ENCODE measurements at regions of chr22 and their contacts with region 1.

Region 1: GRCh38 chr22:41822317-41823060 is 10.4 kb upstream of the SREBF2 start:
- DNase-seq: peak; percentile 86
- H3K4me3 ChIP-seq: no peak overlapping the region
- H3K27ac ChIP-seq: no peak overlapping the region
- H3K4me1 ChIP-seq: peaks cover 9% of the 10 kb centered on the region
- H3K27me3 ChIP-seq: no peaks in the 10 kb centered on the region
- CTCF ChIP-seq: peak; percentile 58 to 63

Region 2: GRCh38 chr22:41697126-41697775 is 125.2 kb before region 1 on chr22:
- CTCF ChIA-PET with region 1: no interaction called
- dilution Hi-C with region 1: no loop called
- in situ Hi-C with region 1: no loop called
- intact Hi-C with region 1: loop called (anchors 1 kb)
- DNase-seq: peak; percentile 64
- H3K4me3 ChIP-seq: peak overlapping the region in 1 of 3 experiments; percentile 28
- H3K27ac ChIP-seq: no peak overlapping the region
- H3K4me1 ChIP-seq: peaks cover 17% of the 10 kb centered on the region
- H3K27me3 ChIP-seq: no peaks in the 10 kb centered on the region
- CTCF ChIP-seq: peak; percentile 88 to 98

Region 3: DNA sequence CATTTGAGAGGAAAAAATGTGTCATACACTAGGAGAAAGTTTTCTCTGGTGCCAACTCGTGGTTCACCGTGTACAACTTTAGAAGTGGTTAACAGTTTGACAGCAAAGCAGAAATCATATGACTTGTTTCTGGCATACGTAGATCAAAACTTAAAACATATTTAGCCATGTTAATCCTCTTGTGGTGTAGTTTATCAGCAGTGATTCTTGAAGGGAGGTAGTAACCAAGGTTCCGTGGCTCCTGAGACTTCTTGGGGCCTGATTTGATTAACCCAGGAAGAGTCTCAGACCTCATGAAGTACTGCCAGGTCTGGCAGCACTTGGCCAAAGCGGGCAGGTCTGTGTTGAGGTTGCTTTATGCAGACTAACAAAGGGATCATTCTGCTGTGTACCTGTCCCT is 50.9 kb after region 1 on chr22:
- CTCF ChIA-PET with region 1: no interaction called
- dilution Hi-C with region 1: no loop called
- in situ Hi-C with region 1: no loop called
- intact Hi-C with region 1: no loop called
- DNase-seq: no peak
- H3K4me3 ChIP-seq: no peak overlapping the region
- H3K27ac ChIP-seq: no peak overlapping the region
- H3K4me1 ChIP-seq: no peaks in the 10 kb centered on the region
- H3K27me3 ChIP-seq: peaks cover 2% of the 10 kb centered on the region
- CTCF ChIP-seq: no peak

Region 4: GRCh38 chr22:41883400-41883799 is 60.9 kb after region 1 on chr22:
- CTCF ChIA-PET with region 1: no interaction called
- dilution Hi-C with region 1: loop called (anchors 5 kb)
- in situ Hi-C with region 1: no loop called
- intact Hi-C with region 1: no loop called
- DNase-seq: no peak
- H3K4me3 ChIP-seq: no peak overlapping the region
- H3K27ac ChIP-seq: no peak overlapping the region
- H3K4me1 ChIP-seq: no peaks in the 10 kb centered on the region
- H3K27me3 ChIP-seq: no peaks in the 10 kb centered on the region
- CTCF ChIP-seq: no peak

Region 5: GRCh38 chr22:41893591-41894375 is 71.3 kb after region 1 on chr22:
- CTCF ChIA-PET with region 1: no interaction called
- dilution Hi-C with region 1: no loop called
- in situ Hi-C with region 1: no loop called
- intact Hi-C with region 1: loop called (anchors 2 kb)
- DNase-seq: no peak
- H3K4me3 ChIP-seq: no peak overlapping the region
- H3K27ac ChIP-seq: no peak overlapping the region
- H3K4me1 ChIP-seq: no peaks in the 10 kb centered on the region
- H3K27me3 ChIP-seq: no peaks in the 10 kb centered on the region
- CTCF ChIP-seq: no peak